Heart right ventricle (tissue), 16 donors: ENCODE measurements at regions of chr13 and their contacts with region 1.

Region 1: GRCh38 chr13:39263033-39263432 is 224.8 kb downstream of the NHLRC3 start:
- DNase-seq: peak in 1 of 2 donors; percentile 69
- ATAC-seq: peak; percentile 84 to 94 (median 88)
- H3K4me3 ChIP-seq: no peak overlapping the region
- H3K27ac ChIP-seq: peak overlapping the region in 5 of 10 donors; percentile 16 to 87 (median 67)
- H3K4me1 ChIP-seq: peaks cover 0 to 60% (median 33%) of the 10 kb centered on the region in 9 donors
- H3K27me3 ChIP-seq: no peaks in the 10 kb centered on the region
- CTCF ChIP-seq: peak; percentile 59 to 83 (median 71)

Region 2: GRCh38 chr13:39051157-39051556 is 211.9 kb before region 1 on chr13:
- intact Hi-C with region 1: loop called in 9 of 10 experiments (anchors 5 to 10 kb)
- DNase-seq: no peak
- ATAC-seq: peak in 1 of 8 donors; percentile 46
- H3K4me3 ChIP-seq: no peak overlapping the region
- H3K27ac ChIP-seq: no peak overlapping the region
- H3K4me1 ChIP-seq: peaks cover 0 to 3% (median 0%) of the 10 kb centered on the region in 9 donors
- H3K27me3 ChIP-seq: no peaks in the 10 kb centered on the region
- CTCF ChIP-seq: peak; percentile 26 to 73 (median 56)

Region 3: GRCh38 chr13:39105110-39105509 is 157.9 kb before region 1 on chr13:
- intact Hi-C with region 1: no loop called
- DNase-seq: no peak
- ATAC-seq: no peak
- H3K4me3 ChIP-seq: no peak overlapping the region
- H3K27ac ChIP-seq: no peak overlapping the region
- H3K4me1 ChIP-seq: peaks cover 0 to 5% (median 0%) of the 10 kb centered on the region in 9 donors
- H3K27me3 ChIP-seq: no peaks in the 10 kb centered on the region
- CTCF ChIP-seq: no peak

Region 4: GRCh38 chr13:39321574-39321973 is 58.5 kb after region 1 on chr13:
- intact Hi-C with region 1: loop called in 1 of 10 experiments (anchors 5 kb)
- DNase-seq: no peak
- ATAC-seq: peak in 5 of 8 donors; percentile 27 to 79 (median 60)
- H3K4me3 ChIP-seq: no peak overlapping the region
- H3K27ac ChIP-seq: peak overlapping the region in 2 of 10 donors; percentile 13 to 42
- H3K4me1 ChIP-seq: peaks cover 0 to 71% (median 46%) of the 10 kb centered on the region in 9 donors
- H3K27me3 ChIP-seq: no peaks in the 10 kb centered on the region
- CTCF ChIP-seq: no peak

Region 5: GRCh38 chr13:39415008-39415802 is 152.2 kb after region 1 on chr13:
- intact Hi-C with region 1: loop called in 1 of 10 experiments (anchors 10 kb)
- DNase-seq: peak; percentile 60 to 72
- ATAC-seq: peak; percentile 72 to 92 (median 84)
- H3K4me3 ChIP-seq: peak overlapping the region in 5 of 10 donors; percentile 2 to 32 (median 15)
- H3K27ac ChIP-seq: peak overlapping the region; percentile 41 to 87 (median 72)
- H3K4me1 ChIP-seq: peaks cover 9 to 93% (median 76%) of the 10 kb centered on the region in 9 donors
- H3K27me3 ChIP-seq: no peaks in the 10 kb centered on the region
- CTCF ChIP-seq: peak; percentile 49 to 74 (median 61)

Region 6: DNA sequence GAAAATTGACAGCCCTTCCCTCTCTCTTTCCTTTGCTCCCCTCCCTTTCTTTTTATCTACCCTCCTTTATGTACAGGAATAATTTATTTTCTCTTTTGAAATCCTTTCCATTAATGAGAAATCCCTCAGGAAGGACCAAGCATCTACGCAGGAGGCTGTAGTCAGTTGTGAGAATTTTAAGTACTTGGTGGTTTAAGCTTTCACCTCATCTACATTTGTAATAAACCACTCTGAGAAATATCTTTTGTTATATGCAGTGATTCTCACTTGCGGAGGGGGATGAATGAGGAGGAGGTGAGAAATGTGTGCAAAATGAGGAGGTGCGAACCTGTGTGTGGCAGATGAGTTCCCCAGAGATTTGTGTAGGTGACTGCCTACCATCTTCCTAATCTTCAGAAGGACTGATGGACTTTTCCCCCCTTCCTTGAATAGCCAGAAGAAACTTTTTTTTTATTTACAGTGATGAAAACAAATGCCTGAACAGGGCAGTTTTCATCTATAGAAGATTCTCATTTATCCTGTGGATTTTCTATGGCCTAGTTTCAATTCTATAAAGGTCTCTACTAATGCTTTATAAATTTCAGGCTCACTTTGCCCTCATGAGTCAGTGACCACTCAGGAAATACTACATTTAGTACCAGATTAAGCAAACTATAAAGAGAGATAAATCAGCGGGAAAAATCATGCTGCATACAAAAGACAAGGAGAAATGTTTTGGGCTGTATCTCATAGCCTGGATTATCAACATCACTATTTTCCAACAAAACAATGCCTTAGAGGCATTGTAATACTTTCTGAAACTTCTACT is 221.7 kb after region 1 on chr13:
- intact Hi-C with region 1: no loop called
- DNase-seq: no peak
- ATAC-seq: no peak
- H3K4me3 ChIP-seq: no peak overlapping the region
- H3K27ac ChIP-seq: peak overlapping the region in 2 of 10 donors; percentile 3 to 27
- H3K4me1 ChIP-seq: peaks cover 0 to 80% (median 50%) of the 10 kb centered on the region in 9 donors
- H3K27me3 ChIP-seq: no peaks in the 10 kb centered on the region
- CTCF ChIP-seq: no peak

Region 7: DNA sequence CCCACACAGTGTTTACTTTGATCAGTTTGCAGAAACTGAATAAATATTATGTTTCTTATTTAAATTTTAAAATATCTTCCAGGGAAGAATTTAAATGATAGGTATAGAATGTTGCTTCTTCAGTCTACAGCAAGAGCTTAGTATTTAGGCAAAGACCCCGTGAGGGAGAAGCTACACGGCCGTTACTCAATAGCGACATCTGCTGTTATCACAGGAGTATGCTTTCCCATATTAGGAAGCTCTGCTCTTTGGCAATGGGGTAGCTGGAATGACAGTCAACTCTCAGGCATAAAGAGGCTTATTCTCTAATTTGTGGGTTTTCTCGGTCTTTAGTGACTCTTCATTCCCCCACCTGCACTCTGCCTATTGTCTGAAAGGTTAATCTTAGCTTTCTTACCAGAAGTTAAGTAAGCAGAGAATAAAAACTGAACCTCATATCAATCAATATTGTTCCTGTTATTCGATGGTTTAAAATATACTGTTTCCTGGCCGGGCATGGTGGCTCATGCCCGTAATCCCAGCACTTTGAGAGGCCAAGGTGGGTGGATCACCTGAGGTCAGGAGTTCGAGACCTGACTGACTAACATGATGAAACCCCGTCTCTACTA is 353.2 kb after region 1 on chr13:
- intact Hi-C with region 1: loop called in 4 of 10 experiments (anchors 2 to 10 kb)
- DNase-seq: peak in 1 of 2 donors; percentile 70
- ATAC-seq: peak; percentile 68 to 87 (median 82)
- H3K4me3 ChIP-seq: no peak overlapping the region
- H3K27ac ChIP-seq: no peak overlapping the region
- H3K4me1 ChIP-seq: peaks cover 0 to 12% (median 0%) of the 10 kb centered on the region in 9 donors
- H3K27me3 ChIP-seq: no peaks in the 10 kb centered on the region
- CTCF ChIP-seq: peak; percentile 81 to 96 (median 92)